Activated CD4-positive, alpha-beta T cell treated with anti-CD3 and anti-CD28 coated beads, Interleukin-2, amount 10 ng/mL, durations not matched to agents 24 days and 14 days (primary cell): ENCODE measurements at regions of chr4 and their contacts with region 1.

Region 1: GRCh38 chr4:101347557-101348366 is 436 bp upstream of the PPP3CA start:
- DNase-seq: peak; percentile 99
- H3K4me3 Mint-ChIP-seq: peak overlapping the region; percentile 97
- H3K27ac Mint-ChIP-seq: peak overlapping the region; percentile 91
- H3K4me1 Mint-ChIP-seq: peaks cover 27% of the 10 kb centered on the region
- H3K27me3 Mint-ChIP-seq: peaks cover 62% of the 10 kb centered on the region

Region 2: GRCh38 chr4:100823066-100823992 is 524.4 kb before region 1 on chr4:
- intact Hi-C with region 1: loop called (anchors 10 kb)
- DNase-seq: peak; percentile 65
- H3K4me3 Mint-ChIP-seq: no peak overlapping the region
- H3K27ac Mint-ChIP-seq: peak overlapping the region; percentile 86
- H3K4me1 Mint-ChIP-seq: peaks cover 19% of the 10 kb centered on the region
- H3K27me3 Mint-ChIP-seq: no peaks in the 10 kb centered on the region

Region 3: GRCh38 chr4:101205916-101206315 is 141.8 kb before region 1 on chr4:
- intact Hi-C with region 1: loop called (anchors 1 kb)
- DNase-seq: peak; percentile 86
- H3K4me3 Mint-ChIP-seq: peak overlapping the region; percentile 13
- H3K27ac Mint-ChIP-seq: peak overlapping the region; percentile 50
- H3K4me1 Mint-ChIP-seq: peaks cover 23% of the 10 kb centered on the region
- H3K27me3 Mint-ChIP-seq: peaks cover 3% of the 10 kb centered on the region

Region 4: GRCh38 chr4:101400096-101400495 is 52.3 kb after region 1 on chr4:
- intact Hi-C with region 1: loop called (anchors 5 kb)
- DNase-seq: peak; percentile 71
- H3K4me3 Mint-ChIP-seq: no peak overlapping the region
- H3K27ac Mint-ChIP-seq: peak overlapping the region; percentile 21
- H3K4me1 Mint-ChIP-seq: peaks cover 14% of the 10 kb centered on the region
- H3K27me3 Mint-ChIP-seq: peaks cover 11% of the 10 kb centered on the region

Region 5: GRCh38 chr4:102263011-102263787 is 915.4 kb after region 1 on chr4:
- intact Hi-C with region 1: loop called (anchors 2 kb)
- DNase-seq: peak; percentile 70
- H3K4me3 Mint-ChIP-seq: no peak overlapping the region
- H3K27ac Mint-ChIP-seq: no peak overlapping the region
- H3K4me1 Mint-ChIP-seq: peaks cover 11% of the 10 kb centered on the region
- H3K27me3 Mint-ChIP-seq: no peaks in the 10 kb centered on the region